ENCODE measurements at regions of chr17 and their contacts with region 1.

Region 1: DNA sequence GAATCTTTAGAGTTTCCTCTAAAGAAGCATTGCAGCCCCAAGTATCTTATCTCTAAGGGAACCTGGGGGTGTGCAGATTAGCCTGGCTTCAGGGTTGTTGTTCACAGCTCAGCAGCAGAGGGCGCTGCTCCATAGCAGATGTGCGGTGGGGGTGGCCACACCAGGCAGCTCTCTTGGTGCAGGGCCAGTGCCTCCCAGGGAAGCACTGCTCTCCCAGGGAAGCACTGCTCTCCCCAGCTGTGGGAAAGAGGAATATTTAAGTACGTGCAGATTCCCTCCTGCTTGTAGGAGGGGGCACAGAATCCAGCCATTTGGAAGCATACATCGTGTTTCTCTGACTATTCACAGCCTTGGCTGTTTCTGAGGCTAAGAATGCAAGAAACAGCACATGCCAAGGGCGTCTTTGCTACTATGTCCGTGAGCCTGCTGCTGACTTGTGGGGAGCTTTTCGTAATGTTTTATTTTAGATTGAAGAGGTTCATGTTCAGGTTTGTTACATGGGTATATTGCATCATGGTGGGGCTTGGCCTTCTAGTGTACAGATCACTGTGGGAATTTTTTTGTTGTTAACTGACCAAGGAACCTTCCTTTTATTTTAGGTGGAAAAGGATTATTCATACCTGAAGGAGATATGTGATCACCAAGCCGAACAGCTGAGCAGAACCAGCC is 217.8 kb downstream of the SPECC1 start:
- DNase-seq: peak in 1 of 2 donors; percentile 90
- H3K4me3 ChIP-seq: peak overlapping the region in 1 of 2 donors; percentile 25
- H3K27ac ChIP-seq: peak overlapping the region; percentile 68 to 74
- H3K4me1 ChIP-seq: peaks cover 7 to 34% of the 10 kb centered on the region in 2 donors
- H3K27me3 ChIP-seq: no peaks in the 10 kb centered on the region
- CTCF ChIP-seq: peak; percentile 64 to 87 (median 79)

Region 2: DNA sequence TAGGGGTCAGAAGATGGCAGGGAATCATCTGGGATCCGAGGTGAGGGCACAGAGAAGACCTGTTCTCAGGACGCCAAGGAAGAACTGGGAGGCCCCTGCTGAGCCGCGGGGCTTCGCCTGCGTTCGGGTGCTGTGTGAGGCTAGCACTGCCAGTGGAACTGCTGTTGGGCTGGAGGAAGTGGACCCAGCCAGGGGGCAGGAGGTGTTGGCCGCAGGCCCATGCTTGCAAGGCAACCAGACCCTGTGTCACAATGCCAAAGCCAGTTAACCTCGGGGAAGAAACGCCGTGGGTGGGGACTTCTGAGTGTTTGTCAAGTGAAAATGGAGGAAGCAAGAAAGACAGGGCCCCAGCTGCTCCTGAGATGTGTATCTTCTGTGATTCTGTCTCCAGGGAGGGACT is 54.9 kb after region 1 on chr17:
- intact Hi-C with region 1: no loop called
- DNase-seq: peak; percentile 16 to 73
- H3K4me3 ChIP-seq: no peak overlapping the region
- H3K27ac ChIP-seq: peak overlapping the region; percentile 44 to 57
- H3K4me1 ChIP-seq: peaks cover 0 to 11% of the 10 kb centered on the region in 2 donors
- H3K27me3 ChIP-seq: no peaks in the 10 kb centered on the region
- CTCF ChIP-seq: no peak

Region 3: DNA sequence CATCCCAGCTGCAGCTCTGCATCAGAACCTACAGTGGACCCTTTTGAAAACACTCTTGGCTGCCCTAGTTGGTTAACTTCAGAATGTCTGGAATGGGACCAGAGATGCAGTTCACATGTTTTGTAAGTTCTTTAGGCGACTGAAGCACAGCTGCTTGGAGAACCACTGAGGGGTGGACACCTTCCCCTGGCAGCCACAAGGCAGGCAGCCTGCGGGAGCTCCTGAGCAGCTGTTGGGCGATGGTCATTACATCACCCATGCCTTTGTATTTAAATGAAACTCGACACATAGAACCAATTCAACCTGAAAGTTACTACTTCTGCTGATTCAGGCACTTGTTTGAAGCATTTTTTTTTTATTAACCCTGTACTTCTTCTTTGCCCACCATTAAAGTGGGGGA is 88.9 kb after region 1 on chr17:
- intact Hi-C with region 1: loop called (anchors 1 kb)
- DNase-seq: no peak
- H3K4me3 ChIP-seq: no peak overlapping the region
- H3K27ac ChIP-seq: no peak overlapping the region
- H3K4me1 ChIP-seq: peaks cover 0 to 5% of the 10 kb centered on the region in 2 donors
- H3K27me3 ChIP-seq: no peaks in the 10 kb centered on the region
- CTCF ChIP-seq: no peak

Region 4: DNA sequence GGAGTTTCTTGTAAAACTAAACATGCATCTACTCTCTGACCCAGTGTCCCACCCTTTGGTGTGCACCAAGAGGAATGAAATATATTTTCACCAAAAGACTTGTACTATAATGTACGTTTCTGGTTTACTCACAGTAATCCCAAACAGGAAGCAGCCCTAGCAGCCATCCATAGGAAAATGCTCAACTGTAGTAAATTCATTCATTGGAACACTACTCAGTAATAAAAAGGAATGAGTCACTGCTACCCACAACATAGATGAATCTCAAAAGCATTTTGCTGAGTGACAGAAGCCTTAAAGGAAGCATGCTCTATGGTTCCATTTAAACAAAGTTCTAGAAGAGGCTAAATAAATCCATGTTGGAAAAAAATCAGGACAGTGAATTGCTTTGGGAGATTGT is 862.2 kb after region 1 on chr17:
- intact Hi-C with region 1: no loop called
- DNase-seq: no peak
- H3K4me3 ChIP-seq: no peak overlapping the region
- H3K27ac ChIP-seq: no peak overlapping the region
- H3K4me1 ChIP-seq: no peaks in the 10 kb centered on the region
- H3K27me3 ChIP-seq: no peaks in the 10 kb centered on the region
- CTCF ChIP-seq: no peak